GM12878 (cell line): ENCODE measurements at regions of chr4 and their contacts with region 1.

Region 1: GRCh38 chr4:86522349-86522748 is 71.8 kb upstream of the PTPN13 start:
- DNase-seq: no peak
- ATAC-seq: peak; percentile 37
- H3K4me3 ChIP-seq: no peak overlapping the region
- H3K27ac ChIP-seq: no peak overlapping the region
- H3K4me1 ChIP-seq: no peaks in the 10 kb centered on the region
- H3K27me3 ChIP-seq: no peaks in the 10 kb centered on the region
- CTCF ChIP-seq: peak in 1 of 3 experiments; percentile 1; a peak in 1 of 6 replicates
- EP300 ChIP-seq: no peak
- POLR2A ChIP-seq: no peak
- RAD21 ChIP-seq: peak; percentile 31; the same call in 1 of the 2 replicates

Region 2: DNA sequence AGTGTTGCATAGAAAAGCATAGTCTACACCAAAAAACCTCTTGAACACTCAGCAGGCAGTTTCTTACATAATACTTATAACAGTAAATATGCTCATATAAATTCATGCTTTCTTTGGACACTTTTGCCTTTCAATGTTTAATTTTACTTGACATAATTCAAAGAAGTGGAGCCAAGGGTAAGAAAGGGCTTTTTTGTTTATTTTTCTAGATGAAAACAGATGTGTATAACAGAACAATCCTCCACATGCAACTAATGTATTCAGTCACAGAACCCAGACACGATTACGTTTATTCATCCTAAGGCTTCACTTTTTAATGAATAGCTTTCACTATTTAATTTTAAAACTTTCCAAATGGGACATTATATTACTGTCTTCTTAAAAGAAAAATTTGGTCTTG is 13.8 kb after region 1 on chr4:
- CTCF ChIA-PET with region 1: interaction called, 7 read pairs
- POLR2A ChIA-PET with region 1: interaction called, 3 read pairs
- RAD21 ChIA-PET with region 1: interaction called, 32 read pairs
- SMC1A ChIA-PET with region 1: interaction called, 17 read pairs
- in situ Hi-C with region 1: no loop called
- intact Hi-C with region 1: no loop called
- DNase-seq: no peak
- ATAC-seq: no peak
- H3K4me3 ChIP-seq: no peak overlapping the region
- H3K27ac ChIP-seq: no peak overlapping the region
- H3K4me1 ChIP-seq: no peaks in the 10 kb centered on the region
- H3K27me3 ChIP-seq: no peaks in the 10 kb centered on the region; a peak in 1 of 4 replicates
- CTCF ChIP-seq: no peak
- EP300 ChIP-seq: no peak
- POLR2A ChIP-seq: no peak
- RAD21 ChIP-seq: no peak

Region 3: DNA sequence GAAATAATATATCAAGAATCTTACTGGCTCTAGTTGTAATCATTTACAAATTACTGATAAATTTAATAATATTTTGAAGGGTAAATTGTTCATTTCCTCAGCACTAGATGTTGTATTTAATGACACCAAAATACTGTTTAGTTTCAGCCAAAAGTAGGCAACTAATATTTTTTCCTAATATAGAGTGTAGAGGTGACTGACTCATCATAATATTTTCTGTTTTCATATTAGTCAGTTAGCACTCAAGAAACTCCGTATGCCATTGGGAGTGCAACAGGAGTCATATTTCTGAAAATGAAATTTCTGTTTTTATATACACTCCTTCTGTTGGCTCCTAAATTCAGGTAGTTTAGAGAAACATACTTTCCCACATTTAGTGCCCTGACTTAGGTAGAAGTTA is 35.2 kb after region 1 on chr4:
- CTCF ChIA-PET with region 1: interaction called, 9 read pairs
- POLR2A ChIA-PET with region 1: interaction called, 3 read pairs
- RAD21 ChIA-PET with region 1: interaction called, 4 read pairs
- SMC1A ChIA-PET with region 1: interaction called, 6 read pairs
- in situ Hi-C with region 1: no loop called
- intact Hi-C with region 1: loop called (anchors 1 kb)
- DNase-seq: no peak
- ATAC-seq: peak; percentile 88
- H3K4me3 ChIP-seq: no peak overlapping the region
- H3K27ac ChIP-seq: peak overlapping the region; percentile 69; the same call in 1 of the 2 replicates
- H3K4me1 ChIP-seq: peaks cover 7% of the 10 kb centered on the region; the same call in 1 of the 2 replicates
- H3K27me3 ChIP-seq: no peaks in the 10 kb centered on the region; a peak in 1 of 4 replicates
- CTCF ChIP-seq: no peak
- EP300 ChIP-seq: no peak
- POLR2A ChIP-seq: no peak
- RAD21 ChIP-seq: no peak

Region 4: DNA sequence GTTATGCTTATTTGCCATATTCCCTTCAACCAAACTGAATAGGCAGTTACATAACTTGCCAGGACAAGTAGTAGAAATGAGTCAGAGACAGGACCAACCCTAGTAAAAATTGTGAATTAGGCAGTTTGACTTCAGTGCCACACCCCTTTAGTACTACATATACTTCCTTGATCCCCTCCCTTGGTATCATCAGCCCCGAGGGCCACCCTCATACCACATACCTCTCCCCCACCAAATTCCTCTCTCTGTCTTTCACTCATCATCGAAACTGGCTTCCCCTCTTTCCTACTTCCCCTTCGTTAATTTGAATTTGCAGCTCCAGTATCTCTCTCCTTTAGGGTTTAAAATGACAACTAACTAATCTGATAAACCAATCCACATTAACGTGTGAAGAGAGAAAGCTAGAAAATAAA is 63.8 kb after region 1 on chr4:
- CTCF ChIA-PET with region 1: interaction called, 33 read pairs
- POLR2A ChIA-PET with region 1: no interaction called
- RAD21 ChIA-PET with region 1: interaction called, 25 read pairs
- SMC1A ChIA-PET with region 1: interaction called, 139 read pairs
- in situ Hi-C with region 1: no loop called
- intact Hi-C with region 1: no loop called
- DNase-seq: no peak
- ATAC-seq: peak; percentile 76
- H3K4me3 ChIP-seq: no peak overlapping the region
- H3K27ac ChIP-seq: no peak overlapping the region
- H3K4me1 ChIP-seq: 0 out of 2 replicates have a peak, but pooled peaks cover 3% of the 10 kb centered on the region
- H3K27me3 ChIP-seq: no peaks in the 10 kb centered on the region
- CTCF ChIP-seq: no peak
- EP300 ChIP-seq: 0 out of 4 replicates have a peak, but pooled peaks of 1 of the 2 experiments have one; percentile 21
- POLR2A ChIP-seq: no peak
- RAD21 ChIP-seq: no peak

Region 5: DNA sequence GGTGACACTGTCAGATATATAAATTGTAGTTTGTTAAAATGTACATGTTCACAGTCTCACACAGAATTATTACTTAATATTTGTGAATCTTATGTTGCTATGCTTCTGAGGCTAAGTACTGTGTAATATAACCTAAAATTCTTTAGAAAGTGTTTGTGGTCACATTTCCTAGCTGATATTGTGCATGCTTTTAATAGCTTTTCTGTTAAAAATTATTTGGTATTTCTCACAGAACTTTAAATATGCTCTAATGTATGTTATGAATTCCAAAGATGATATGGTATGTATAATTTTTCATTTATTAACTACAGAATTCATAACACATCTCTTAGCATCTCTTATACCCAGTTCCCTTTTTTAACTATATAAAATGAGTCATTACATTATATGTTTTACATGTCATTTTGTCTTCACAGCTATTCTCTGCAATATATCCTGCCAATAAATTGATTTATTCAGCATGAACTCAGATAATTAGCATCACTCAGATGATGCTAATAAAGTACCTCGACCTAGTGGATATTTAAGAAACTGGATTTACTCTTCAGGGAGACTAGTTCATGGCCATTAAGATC is 81.0 kb after region 1 on chr4:
- CTCF ChIA-PET with region 1: interaction called, 3 read pairs
- POLR2A ChIA-PET with region 1: interaction called, 5 read pairs
- RAD21 ChIA-PET with region 1: interaction called, 11 read pairs
- SMC1A ChIA-PET with region 1: interaction called, 139 read pairs
- in situ Hi-C with region 1: no loop called
- intact Hi-C with region 1: no loop called
- DNase-seq: no peak
- ATAC-seq: peak; percentile 40
- H3K4me3 ChIP-seq: no peak overlapping the region
- H3K27ac ChIP-seq: no peak overlapping the region
- H3K4me1 ChIP-seq: no peaks in the 10 kb centered on the region
- H3K27me3 ChIP-seq: no peaks in the 10 kb centered on the region
- CTCF ChIP-seq: no peak
- EP300 ChIP-seq: no peak
- POLR2A ChIP-seq: no peak
- RAD21 ChIP-seq: no peak

Region 6: GRCh38 chr4:86640469-86640868 is 118.1 kb after region 1 on chr4:
- CTCF ChIA-PET with region 1: interaction called, 10 read pairs
- POLR2A ChIA-PET with region 1: interaction called, 3 read pairs
- RAD21 ChIA-PET with region 1: interaction called, 9 read pairs
- SMC1A ChIA-PET with region 1: interaction called, 5 read pairs
- in situ Hi-C with region 1: no loop called
- intact Hi-C with region 1: no loop called
- DNase-seq: no peak
- ATAC-seq: peak; percentile 62
- H3K4me3 ChIP-seq: no peak overlapping the region
- H3K27ac ChIP-seq: no peak overlapping the region
- H3K4me1 ChIP-seq: no peaks in the 10 kb centered on the region
- H3K27me3 ChIP-seq: no peaks in the 10 kb centered on the region
- CTCF ChIP-seq: no peak
- EP300 ChIP-seq: no peak
- POLR2A ChIP-seq: no peak
- RAD21 ChIP-seq: no peak

Region 7: DNA sequence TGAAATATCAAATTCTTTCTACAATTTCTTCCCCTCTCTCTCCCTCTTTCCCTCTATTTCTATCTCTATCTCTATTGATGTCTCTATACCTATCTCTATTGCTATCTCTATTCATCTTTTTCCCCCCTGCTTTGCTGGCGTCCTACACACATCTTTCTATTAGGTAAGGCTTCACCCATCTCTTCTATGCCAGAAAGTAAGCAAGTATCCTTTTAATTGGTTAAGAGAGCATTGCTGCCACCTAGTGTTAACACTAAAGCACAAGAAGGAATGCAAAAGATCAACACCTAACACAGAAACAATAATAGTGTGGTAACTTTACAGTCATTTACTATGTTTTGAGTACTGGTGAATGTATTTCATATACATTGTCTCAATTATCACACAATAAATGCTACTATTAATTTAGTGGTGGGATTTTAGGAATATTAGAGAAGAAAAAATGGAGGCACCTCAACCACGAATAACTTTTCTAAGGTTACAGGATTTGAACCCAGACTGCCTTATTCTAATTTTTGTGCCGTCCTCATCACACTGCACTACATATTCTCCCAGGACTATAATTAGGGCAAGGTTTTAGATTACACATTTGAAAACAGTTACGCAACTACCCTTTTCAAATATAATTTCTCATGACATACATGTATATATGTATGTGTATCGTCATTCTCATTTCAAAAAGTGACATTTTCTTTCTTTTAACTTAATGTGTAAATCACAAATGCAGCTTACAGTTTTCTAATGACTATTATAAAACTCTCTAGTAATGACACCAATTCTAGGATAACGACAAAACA is 373.5 kb after region 1 on chr4:
- CTCF ChIA-PET with region 1: interaction called, 30 read pairs
- POLR2A ChIA-PET with region 1: no interaction called
- RAD21 ChIA-PET with region 1: interaction called, 18 read pairs
- SMC1A ChIA-PET with region 1: interaction called, 23 read pairs
- in situ Hi-C with region 1: no loop called
- intact Hi-C with region 1: no loop called
- DNase-seq: no peak
- ATAC-seq: peak; percentile 65
- H3K4me3 ChIP-seq: no peak overlapping the region
- H3K27ac ChIP-seq: no peak overlapping the region
- H3K4me1 ChIP-seq: no peaks in the 10 kb centered on the region
- H3K27me3 ChIP-seq: no peaks in the 10 kb centered on the region
- CTCF ChIP-seq: peak; percentile 52 to 80 (median 66)
- EP300 ChIP-seq: no peak
- POLR2A ChIP-seq: no peak
- RAD21 ChIP-seq: peak; percentile 97